Activated CD4-positive, alpha-beta T cell treated with anti-CD3 and anti-CD28 coated beads for 36 hours (primary cell): ENCODE measurements at regions of chr21 and their contacts with region 1.

Region 1: DNA sequence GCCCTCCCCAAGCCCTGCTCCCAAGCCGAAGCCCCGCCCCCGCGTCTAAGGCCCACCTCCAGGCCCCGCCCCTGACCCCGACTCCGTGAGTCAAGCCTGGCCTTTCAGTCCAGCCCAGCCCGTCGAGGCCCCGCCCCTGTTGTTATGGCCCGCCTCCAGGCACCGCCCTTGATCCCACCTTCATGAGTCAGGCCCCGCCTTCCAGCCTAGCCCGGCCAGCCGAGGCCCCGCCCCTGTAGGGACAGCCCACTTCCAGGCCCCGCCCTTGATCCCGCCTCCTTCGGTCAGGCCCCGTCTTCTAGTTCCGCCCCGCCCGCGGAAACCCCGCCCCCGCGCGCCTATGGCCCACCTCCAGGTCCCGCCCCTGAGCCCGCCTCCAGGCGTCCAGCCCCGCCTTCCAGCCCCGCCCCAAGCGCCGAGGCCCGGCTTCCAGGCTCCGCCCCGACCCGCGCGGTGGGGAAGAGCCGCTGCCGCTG is 247 bp upstream of the DOP1B start:
- DNase-seq: peak; percentile 100
- ATAC-seq: peak; percentile 93
- H3K4me3 Mint-ChIP-seq: peak overlapping the region; percentile 77
- H3K27ac Mint-ChIP-seq: no peak overlapping the region
- H3K4me1 Mint-ChIP-seq: peaks cover 23% of the 10 kb centered on the region
- H3K27me3 Mint-ChIP-seq: no peaks in the 10 kb centered on the region

Region 2: DNA sequence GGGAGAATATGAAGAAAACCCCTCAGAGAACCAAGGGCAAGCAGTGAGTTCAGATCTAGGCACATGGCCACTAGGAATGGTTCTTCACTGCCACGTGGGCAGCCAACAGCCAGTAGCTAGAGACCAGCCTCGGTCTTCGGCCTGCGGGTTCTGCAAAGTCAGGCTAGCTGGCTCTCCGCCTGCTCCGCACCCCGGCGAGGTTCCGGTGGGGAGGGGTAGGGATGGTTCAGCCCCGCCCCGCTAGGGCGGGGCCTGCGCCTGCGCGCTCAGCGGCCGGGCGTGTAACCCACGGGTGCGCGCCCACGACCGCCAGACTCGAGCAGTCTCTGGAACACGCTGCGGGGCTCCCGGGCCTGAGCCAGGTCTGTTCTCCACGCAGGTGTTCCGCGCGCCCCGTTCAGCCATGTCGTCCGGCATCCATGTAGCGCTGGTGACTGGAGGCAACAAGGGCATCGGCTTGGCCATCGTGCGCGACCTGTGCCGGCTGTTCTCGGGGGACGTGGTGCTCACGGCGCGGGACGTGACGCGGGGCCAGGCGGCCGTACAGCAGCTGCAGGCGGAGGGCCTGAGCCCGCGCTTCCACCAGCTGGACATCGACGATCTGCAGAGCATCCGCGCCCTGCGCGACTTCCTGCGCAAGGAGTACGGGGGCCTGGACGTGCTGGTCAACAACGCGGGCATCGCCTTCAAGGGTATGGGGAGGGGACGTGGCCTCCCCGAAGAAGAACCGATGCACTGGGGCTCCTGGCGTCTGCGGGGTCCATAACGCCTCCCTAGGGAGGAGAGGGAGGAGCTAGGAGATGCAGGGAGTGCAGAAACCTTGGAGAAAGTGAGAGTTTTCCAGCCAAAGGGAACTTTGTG is 86.4 kb before region 1 on chr21 and contains the start of gene CBR1:
- CTCF ChIA-PET with region 1: no interaction called
- POLR2A ChIA-PET with region 1: no interaction called
- intact Hi-C with region 1: loop called in 1 of 2 experiments (anchors 1 kb)
- DNase-seq: peak; percentile 94
- ATAC-seq: peak; percentile 98
- H3K4me3 Mint-ChIP-seq: peak within 1 kb of the TSS; percentile 83
- H3K27ac Mint-ChIP-seq: peak within 1 kb of the TSS; percentile 88
- H3K4me1 Mint-ChIP-seq: peaks cover 41% of the 10 kb centered on the region
- H3K27me3 Mint-ChIP-seq: no peaks in the 10 kb centered on the region
- total RNA-seq, gene CBR1: 48.6 to 54.1 TPM

Region 3: GRCh38 chr21:36141513-36141925 is 14.9 kb before region 1 on chr21:
- CTCF ChIA-PET with region 1: interaction called, 5 read pairs
- POLR2A ChIA-PET with region 1: interaction called, 6 read pairs
- intact Hi-C with region 1: loop called in 1 of 2 experiments (anchors 1 kb)
- DNase-seq: peak; percentile 92
- ATAC-seq: peak; percentile 96
- H3K4me3 Mint-ChIP-seq: no peak overlapping the region
- H3K27ac Mint-ChIP-seq: peak overlapping the region; percentile 29
- H3K4me1 Mint-ChIP-seq: peaks cover 25% of the 10 kb centered on the region
- H3K27me3 Mint-ChIP-seq: no peaks in the 10 kb centered on the region

Region 4: GRCh38 chr21:36209626-36210171 is 53.3 kb after region 1 on chr21:
- CTCF ChIA-PET with region 1: interaction called, 5 read pairs
- POLR2A ChIA-PET with region 1: no interaction called
- intact Hi-C with region 1: loop called (anchors 1 kb)
- DNase-seq: peak; percentile 70
- ATAC-seq: peak; percentile 43
- H3K4me3 Mint-ChIP-seq: no peak overlapping the region
- H3K27ac Mint-ChIP-seq: no peak overlapping the region
- H3K4me1 Mint-ChIP-seq: peaks cover 15% of the 10 kb centered on the region
- H3K27me3 Mint-ChIP-seq: no peaks in the 10 kb centered on the region

Region 5: DNA sequence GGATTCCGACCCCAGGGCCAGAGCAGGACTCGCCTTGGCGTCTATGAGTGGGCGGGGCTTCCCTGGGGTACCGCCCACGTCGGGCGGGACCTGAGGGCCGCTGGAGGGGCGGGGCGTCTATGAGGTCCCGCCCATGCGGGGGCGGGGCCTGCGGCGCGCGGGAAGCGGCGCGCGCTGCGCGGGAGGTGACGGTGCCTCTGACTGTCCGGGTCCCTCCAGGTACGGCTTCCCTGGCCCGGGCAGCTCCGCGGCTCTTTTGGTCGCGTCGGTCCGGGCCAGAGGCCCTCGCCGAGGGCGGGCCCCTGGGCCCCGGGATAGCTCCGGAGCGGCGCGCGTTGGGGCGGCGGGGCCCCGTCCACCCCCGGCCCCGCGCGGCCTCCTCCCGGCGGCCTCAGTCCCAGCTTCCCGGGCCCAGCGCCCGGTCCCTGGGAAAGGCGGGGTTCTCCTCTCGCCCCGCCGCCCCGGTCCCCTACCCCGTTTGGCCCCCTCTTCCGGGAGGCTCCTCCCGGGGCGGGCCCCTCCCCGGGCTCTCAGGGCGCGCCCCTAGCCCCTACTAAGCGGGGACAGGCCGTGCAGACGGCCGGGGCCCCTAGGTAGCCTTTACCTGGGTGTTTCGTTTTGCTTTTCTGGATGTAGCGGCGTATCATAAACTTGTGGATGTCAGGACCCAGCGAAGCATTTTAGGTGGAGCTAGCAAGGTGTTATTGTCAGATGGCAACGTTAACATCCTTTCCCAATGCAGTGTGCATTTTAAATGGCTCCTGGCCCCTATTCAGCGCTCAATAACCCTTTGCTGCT is 229.1 kb after region 1 on chr21 and contains the start of gene CHAF1B:
- CTCF ChIA-PET with region 1: no interaction called
- POLR2A ChIA-PET with region 1: interaction called, 3 read pairs
- intact Hi-C with region 1: loop called (anchors 1 kb)
- DNase-seq: peak; percentile 91
- ATAC-seq: peak; percentile 96
- H3K4me3 Mint-ChIP-seq: peak within 1 kb of the TSS; percentile 81
- H3K27ac Mint-ChIP-seq: peak within 1 kb of the TSS; percentile 83
- H3K4me1 Mint-ChIP-seq: peaks cover 17% of the 10 kb centered on the region
- H3K27me3 Mint-ChIP-seq: no peaks in the 10 kb centered on the region
- total RNA-seq, gene CHAF1B: 33.2 to 36.3 TPM